B cell (primary cell): ENCODE measurements at regions of chr12 and their contacts with region 1.

Region 1: DNA sequence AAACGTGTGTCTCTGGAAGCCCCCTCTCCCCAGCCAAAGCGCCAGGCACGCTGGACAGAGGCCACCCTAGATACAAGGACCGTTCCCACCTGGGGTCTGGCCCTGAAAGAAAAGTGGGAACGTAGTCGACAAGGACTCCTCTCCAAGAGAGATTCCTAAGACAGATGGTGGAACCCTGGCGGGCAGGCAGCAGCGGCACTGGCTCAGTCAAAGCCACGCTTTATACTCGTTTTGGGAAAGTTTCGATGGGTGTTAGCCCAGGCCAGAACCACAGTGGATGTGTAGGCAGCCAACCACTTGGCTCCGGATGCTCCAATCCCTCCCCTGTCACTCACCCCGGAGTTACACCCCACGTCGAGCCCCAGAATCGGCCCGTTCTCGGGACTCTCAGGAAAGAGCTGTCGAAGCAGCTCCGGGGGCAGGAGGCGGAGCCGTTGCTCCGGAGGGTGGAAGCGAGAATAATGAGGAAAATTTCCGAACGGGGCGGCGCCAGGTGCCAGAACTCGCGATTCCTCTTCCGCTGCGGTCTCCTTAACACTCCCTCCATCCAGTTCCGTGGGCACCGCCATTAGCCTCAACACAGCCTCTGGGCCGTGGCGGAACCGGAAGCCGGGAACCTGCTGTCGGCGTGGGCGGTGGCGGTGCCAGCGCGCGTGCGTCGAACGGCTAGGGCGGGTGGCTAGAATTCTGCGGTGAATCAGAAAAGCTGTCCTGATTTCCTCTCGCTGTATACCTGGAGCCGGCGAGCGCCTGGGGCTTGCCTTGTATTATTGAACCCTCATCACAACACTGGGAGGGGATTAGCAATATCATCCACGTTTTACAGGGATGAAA is at the start of gene BCDIN3D:
- DNase-seq: peak; percentile 93
- ATAC-seq: peak; percentile 93
- H3K4me3 ChIP-seq: peak within 1 kb of the TSS; percentile 70 to 99 (median 97)
- H3K4me3 Mint-ChIP-seq: peak within 1 kb of the TSS; percentile 94
- H3K27ac ChIP-seq: peak within 1 kb of the TSS; percentile 78 to 80
- H3K27ac Mint-ChIP-seq: peak within 1 kb of the TSS; percentile 96
- H3K4me1 ChIP-seq: peaks cover 12 to 28% of the 10 kb centered on the region in 2 donors
- H3K4me1 Mint-ChIP-seq: peaks cover 29% of the 10 kb centered on the region
- H3K27me3 ChIP-seq: no peaks in the 10 kb centered on the region
- H3K27me3 Mint-ChIP-seq: no peaks in the 10 kb centered on the region
- CTCF ChIP-seq: no peak
- total RNA-seq, gene BCDIN3D: 14.7 and 17.4 TPM in 2 replicates

Region 2: DNA sequence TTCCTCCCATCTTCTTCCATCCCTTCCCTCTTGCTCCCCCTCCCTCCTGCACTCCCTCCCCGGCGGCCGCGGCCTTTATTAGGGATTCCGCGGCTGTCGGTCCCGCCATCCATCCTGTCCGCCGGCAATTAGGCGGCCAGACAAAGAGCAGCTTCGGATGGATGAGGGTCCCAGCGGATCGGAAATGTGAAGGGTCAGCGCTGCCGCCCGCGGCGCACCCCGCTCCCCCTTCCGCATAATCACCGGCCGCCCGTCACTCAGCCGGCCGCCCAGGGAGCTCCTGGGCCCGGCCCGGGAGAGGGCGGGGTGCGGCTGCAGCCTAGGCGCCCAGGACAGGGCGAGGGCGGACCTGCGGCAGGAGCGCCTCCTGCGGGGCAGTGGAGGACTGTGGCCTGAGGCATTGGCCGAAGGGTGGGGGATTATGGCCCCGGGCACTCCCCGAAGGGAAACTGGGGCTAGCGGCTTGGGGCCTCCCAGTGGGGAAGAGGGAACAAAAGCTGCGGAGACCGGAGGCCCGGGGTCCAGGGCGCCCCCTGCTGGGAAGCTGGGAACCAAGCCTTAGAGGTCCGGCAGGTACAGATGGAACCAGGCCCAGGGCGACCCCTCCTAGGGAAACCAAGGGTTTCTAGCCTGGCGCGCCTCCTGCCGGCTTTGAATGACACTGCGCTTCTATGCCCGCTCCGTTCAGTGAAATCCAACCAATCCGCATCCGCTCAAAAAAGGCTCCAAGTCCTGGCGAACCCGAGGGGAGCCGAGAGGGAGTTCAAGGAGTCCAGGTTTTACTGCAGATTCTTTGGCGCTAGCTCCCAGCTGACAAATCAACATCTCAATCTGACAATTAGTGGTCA is 500.4 kb before region 1 on chr12:
- CTCF ChIA-PET with region 1: no interaction called
- POLR2A ChIA-PET with region 1: no interaction called
- intact Hi-C with region 1: loop called (anchors 10 kb)
- DNase-seq: peak; percentile 83
- ATAC-seq: peak; percentile 69
- H3K4me3 ChIP-seq: peak overlapping the region in 4 of 5 experiments; percentile 29 to 51 (median 44)
- H3K4me3 Mint-ChIP-seq: peak overlapping the region; percentile 86
- H3K27ac ChIP-seq: no peak overlapping the region
- H3K27ac Mint-ChIP-seq: no peak overlapping the region
- H3K4me1 ChIP-seq: peaks cover 60 to 65% of the 10 kb centered on the region in 2 donors
- H3K4me1 Mint-ChIP-seq: peaks cover 58% of the 10 kb centered on the region
- H3K27me3 ChIP-seq: peaks cover 0 to 89% (median 47%) of the 10 kb centered on the region in 4 experiments
- H3K27me3 Mint-ChIP-seq: peaks cover 53% of the 10 kb centered on the region
- CTCF ChIP-seq: peak; percentile 96

Region 3: DNA sequence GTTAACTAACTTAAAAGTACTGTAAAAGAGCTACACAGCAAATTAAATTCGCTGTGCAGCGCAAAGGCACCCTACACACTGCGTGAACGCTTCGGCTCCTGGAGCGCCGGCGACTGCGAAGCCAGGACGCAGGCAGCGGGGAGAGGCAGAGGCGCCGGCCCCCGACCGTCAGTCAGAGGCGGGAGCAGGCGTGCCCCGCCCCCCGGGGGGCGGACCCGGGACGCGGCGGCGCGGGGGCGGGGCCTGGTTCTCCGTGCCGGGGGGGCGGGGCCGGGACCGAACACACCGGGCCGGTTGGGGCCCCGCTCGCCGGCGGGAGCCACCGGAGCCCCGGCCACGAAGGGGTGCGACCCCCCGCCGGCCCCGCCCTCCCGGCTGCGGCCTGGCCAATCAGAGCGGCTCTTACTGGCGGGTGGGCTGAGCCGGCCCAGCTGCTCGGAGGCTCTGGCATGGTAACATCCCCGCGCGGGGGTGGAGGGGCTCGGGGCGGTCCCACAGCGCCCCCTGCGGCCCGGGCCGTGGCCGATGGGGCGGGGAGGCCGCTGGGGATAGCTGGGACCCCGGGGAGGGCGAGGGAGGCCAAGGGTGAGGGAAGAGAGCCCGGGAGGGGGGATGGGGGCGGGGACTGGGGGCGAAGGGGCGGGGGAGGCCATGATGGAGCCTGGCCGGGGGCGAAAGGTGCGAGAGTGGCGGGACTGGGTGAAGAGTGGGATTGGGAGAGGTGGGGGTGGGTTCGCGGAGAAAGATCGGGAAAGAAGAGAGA is 219.4 kb before region 1 on chr12 and contains the start of gene PRPF40B:
- CTCF ChIA-PET with region 1: interaction called, 5 read pairs
- POLR2A ChIA-PET with region 1: interaction called, 5 read pairs
- intact Hi-C with region 1: loop called (anchors 2 kb)
- DNase-seq: peak; percentile 92
- ATAC-seq: peak; percentile 85
- H3K4me3 ChIP-seq: peak within 1 kb of the TSS; percentile 56 to 85 (median 73)
- H3K4me3 Mint-ChIP-seq: peak within 1 kb of the TSS; percentile 94
- H3K27ac ChIP-seq: peak within 1 kb of the TSS; percentile 56 to 65
- H3K27ac Mint-ChIP-seq: peak within 1 kb of the TSS; percentile 91
- H3K4me1 ChIP-seq: peaks cover 11 to 21% of the 10 kb centered on the region in 2 donors
- H3K4me1 Mint-ChIP-seq: peaks cover 19% of the 10 kb centered on the region
- H3K27me3 ChIP-seq: no peaks in the 10 kb centered on the region
- H3K27me3 Mint-ChIP-seq: no peaks in the 10 kb centered on the region
- CTCF ChIP-seq: peak; percentile 51
- total RNA-seq, gene PRPF40B: 23.6 and 23.7 TPM in 2 replicates

Region 4: GRCh38 chr12:49776413-49776812 is 66.3 kb before region 1 on chr12:
- CTCF ChIA-PET with region 1: interaction called, 43 read pairs
- POLR2A ChIA-PET with region 1: no interaction called
- intact Hi-C with region 1: loop called (anchors 1 kb)
- DNase-seq: peak; percentile 63
- ATAC-seq: peak; percentile 73
- H3K4me3 ChIP-seq: no peak overlapping the region
- H3K4me3 Mint-ChIP-seq: no peak overlapping the region
- H3K27ac ChIP-seq: no peak overlapping the region
- H3K27ac Mint-ChIP-seq: no peak overlapping the region
- H3K4me1 ChIP-seq: peaks cover 0 to 10% of the 10 kb centered on the region in 2 donors
- H3K4me1 Mint-ChIP-seq: peaks cover 11% of the 10 kb centered on the region
- H3K27me3 ChIP-seq: peaks cover 0 to 16% (median 5%) of the 10 kb centered on the region in 4 experiments
- H3K27me3 Mint-ChIP-seq: peaks cover 27% of the 10 kb centered on the region
- CTCF ChIP-seq: peak; percentile 70

Region 5: GRCh38 chr12:50025187-50026059 is 182.7 kb after region 1 on chr12 and contains the start of gene RACGAP1:
- CTCF ChIA-PET with region 1: no interaction called
- POLR2A ChIA-PET with region 1: no interaction called
- intact Hi-C with region 1: loop called (anchors 1 kb)
- DNase-seq: peak; percentile 99
- ATAC-seq: peak; percentile 97
- H3K4me3 ChIP-seq: peak within 1 kb of the TSS; percentile 44 to 75 (median 65)
- H3K4me3 Mint-ChIP-seq: peak within 1 kb of the TSS; percentile 94
- H3K27ac ChIP-seq: peak within 1 kb of the TSS; percentile 52 to 63
- H3K27ac Mint-ChIP-seq: peak within 1 kb of the TSS; percentile 85
- H3K4me1 ChIP-seq: peaks cover 8 to 10% of the 10 kb centered on the region in 2 donors
- H3K4me1 Mint-ChIP-seq: peaks cover 17% of the 10 kb centered on the region
- H3K27me3 ChIP-seq: no peaks in the 10 kb centered on the region
- H3K27me3 Mint-ChIP-seq: no peaks in the 10 kb centered on the region
- CTCF ChIP-seq: no peak
- total RNA-seq, gene RACGAP1: 11.3 and 14.2 TPM in 2 replicates